Thyroid gland (tissue), 4 donors: ENCODE measurements at regions of chr6 and their contacts with region 1.

Region 1: GRCh38 chr6:2841264-2842138 is at the start of gene SERPINB1:
- DNase-seq: peak; percentile 86 to 87
- H3K4me3 ChIP-seq: peak within 1 kb of the TSS; percentile 9 to 54 (median 51)
- H3K27ac ChIP-seq: peak within 1 kb of the TSS; percentile 93 to 99 (median 97)
- H3K4me1 ChIP-seq: peaks cover 21 to 35% of the 10 kb centered on the region in 2 donors
- H3K27me3 ChIP-seq: no peaks in the 10 kb centered on the region
- CTCF ChIP-seq: peak in 1 of 6 experiments; percentile 14
- POLR2A ChIP-seq: peak in 1 of 2 donors; percentile 71
- total RNA-seq, gene SERPINB1: 36.2 to 52.8 (median 43.4) TPM

Region 2: GRCh38 chr6:2791124-2791974 is 50.2 kb before region 1 on chr6:
- intact Hi-C with region 1: loop called (anchors 2 kb)
- DNase-seq: peak; percentile 68 to 74
- H3K4me3 ChIP-seq: no peak overlapping the region
- H3K27ac ChIP-seq: peak overlapping the region in 2 of 3 donors; percentile 27 to 66
- H3K4me1 ChIP-seq: peaks cover 8 to 15% of the 10 kb centered on the region in 2 donors
- H3K27me3 ChIP-seq: no peaks in the 10 kb centered on the region
- CTCF ChIP-seq: peak; percentile 30 to 93 (median 72)
- POLR2A ChIP-seq: no peak

Region 3: GRCh38 chr6:2917065-2917464 is 75.6 kb after region 1 on chr6:
- intact Hi-C with region 1: loop called (anchors 5 kb)
- DNase-seq: no peak
- H3K4me3 ChIP-seq: no peak overlapping the region
- H3K27ac ChIP-seq: no peak overlapping the region
- H3K4me1 ChIP-seq: no peaks in the 10 kb centered on the region
- H3K27me3 ChIP-seq: no peaks in the 10 kb centered on the region
- CTCF ChIP-seq: no peak
- POLR2A ChIP-seq: no peak

Region 4: DNA sequence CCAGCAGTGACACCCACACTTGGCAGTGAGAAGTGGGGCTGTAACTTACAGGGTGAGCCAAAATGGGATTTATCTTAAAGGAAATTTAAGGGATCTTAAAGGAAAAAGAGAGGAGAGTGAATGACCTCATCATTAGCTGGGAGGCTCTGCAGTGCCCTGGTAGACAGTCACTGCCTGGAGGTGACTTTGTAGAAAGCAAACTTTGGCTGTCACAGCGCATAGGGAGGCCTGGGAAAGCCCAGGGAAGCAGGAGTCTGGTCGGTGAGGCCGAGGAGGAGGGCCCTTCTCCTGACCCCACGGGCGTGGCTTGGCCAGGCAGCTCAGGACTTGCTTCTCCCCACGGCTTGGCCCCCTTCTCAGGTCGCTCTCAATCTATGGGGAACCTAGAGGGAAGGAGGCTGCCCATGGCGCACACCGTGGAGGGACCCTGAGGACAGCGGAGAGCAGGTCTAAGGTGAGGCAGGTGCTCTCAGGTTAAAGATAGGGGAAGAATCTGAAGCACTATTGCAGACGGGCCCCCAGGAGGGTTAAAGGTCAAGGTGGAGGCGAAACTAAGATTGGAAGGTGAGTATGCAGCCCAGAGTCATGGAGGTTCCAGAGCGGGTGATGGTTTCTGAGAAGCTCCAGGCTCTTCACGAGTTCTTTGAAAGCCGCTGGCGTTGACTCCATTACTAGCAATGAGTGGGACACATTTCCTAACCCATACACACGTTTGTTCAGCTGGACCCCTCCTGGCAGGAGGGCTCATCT is 211.2 kb after region 1 on chr6:
- intact Hi-C with region 1: loop called (anchors 10 kb)
- DNase-seq: no peak
- H3K4me3 ChIP-seq: no peak overlapping the region
- H3K27ac ChIP-seq: no peak overlapping the region
- H3K4me1 ChIP-seq: peaks cover 0 to 15% of the 10 kb centered on the region in 2 donors
- H3K27me3 ChIP-seq: no peaks in the 10 kb centered on the region
- CTCF ChIP-seq: no peak
- POLR2A ChIP-seq: no peak